ENCODE measurements at regions of chr11 and their contacts with region 1.

Region 1: GRCh38 chr11:20609727-20610707 is 10.6 kb downstream of the SLC6A5 start:
- DNase-seq: no peak
- ATAC-seq: peak; percentile 99
- H3K4me3 ChIP-seq: peak overlapping the region; percentile 32; the same call in 1 of the 2 replicates
- H3K27ac ChIP-seq: no peak overlapping the region
- H3K4me1 ChIP-seq: peaks cover 4% of the 10 kb centered on the region; the same call in 1 of the 2 replicates
- H3K27me3 ChIP-seq: peaks cover 3 to 16% of the 10 kb centered on the region in 2 experiments
- CTCF ChIP-seq: peak; percentile 96 to 98 (median 97)
- EP300 ChIP-seq: no peak
- POLR2A ChIP-seq: no peak
- RAD21 ChIP-seq: peak; percentile 97

Region 2: GRCh38 chr11:18791207-18791968 is 1818.6 kb before region 1 on chr11 and contains the start of gene PTPN5:
- CTCF ChIA-PET with region 1: no interaction called
- POLR2A ChIA-PET with region 1: no interaction called
- RAD21 ChIA-PET with region 1: no interaction called
- SMC1A ChIA-PET with region 1: no interaction called
- in situ Hi-C with region 1: no loop called
- intact Hi-C with region 1: no loop called
- DNase-seq: no peak
- ATAC-seq: peak; percentile 32; the same call in 2 of the 3 replicates
- H3K4me3 ChIP-seq: no peak within 1 kb of the TSS
- H3K27ac ChIP-seq: no peak within 1 kb of the TSS
- H3K4me1 ChIP-seq: no peaks in the 10 kb centered on the region
- H3K27me3 ChIP-seq: peaks cover 9 to 15% of the 10 kb centered on the region in 2 experiments
- CTCF ChIP-seq: no peak
- EP300 ChIP-seq: no peak
- POLR2A ChIP-seq: no peak
- RAD21 ChIP-seq: no peak
- polyA plus RNA-seq, gene PTPN5: not detected

Region 3: GRCh38 chr11:20387241-20388095 is 222.5 kb before region 1 on chr11 and contains the start of gene PRMT3:
- CTCF ChIA-PET with region 1: interaction called, 10 read pairs
- POLR2A ChIA-PET with region 1: no interaction called
- RAD21 ChIA-PET with region 1: interaction called, 7 read pairs
- SMC1A ChIA-PET with region 1: no interaction called
- in situ Hi-C with region 1: loop called (anchors 5 kb)
- intact Hi-C with region 1: loop called (anchors 2 kb)
- DNase-seq: peak; percentile 84
- ATAC-seq: peak; percentile 88
- H3K4me3 ChIP-seq: peak within 1 kb of the TSS; percentile 94
- H3K27ac ChIP-seq: peak within 1 kb of the TSS; percentile 96
- H3K4me1 ChIP-seq: no peaks in the 10 kb centered on the region
- H3K27me3 ChIP-seq: no peaks in the 10 kb centered on the region
- CTCF ChIP-seq: peak in 2 of 3 experiments; percentile 94 to 97; a peak in 5 of 6 replicates
- EP300 ChIP-seq: no peak
- POLR2A ChIP-seq: peak; percentile 94
- RAD21 ChIP-seq: peak; percentile 44; the same call in 1 of the 2 replicates
- polyA plus RNA-seq, gene PRMT3: 13.9 TPM

Region 4: DNA sequence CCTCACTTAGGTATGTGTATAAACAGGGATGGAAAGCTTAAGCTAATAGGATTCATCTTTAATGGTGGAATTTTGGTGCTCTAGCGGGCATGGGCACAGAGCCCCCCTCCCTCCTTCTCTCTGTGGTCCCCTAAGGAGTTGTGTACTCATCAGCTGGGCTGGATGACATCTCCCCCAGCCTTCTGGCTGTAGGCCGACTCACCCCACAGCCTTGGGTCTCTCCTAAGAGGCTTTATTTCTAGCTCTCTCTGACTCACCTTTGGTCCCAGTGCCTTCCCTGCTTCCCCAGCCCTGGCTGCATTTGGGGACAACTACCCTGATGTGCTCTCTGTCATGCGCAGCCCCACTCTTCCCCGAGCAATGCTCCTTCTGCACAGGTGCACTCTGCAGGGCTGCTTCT is 16.3 kb after region 1 on chr11:
- CTCF ChIA-PET with region 1: interaction called, 12 read pairs
- POLR2A ChIA-PET with region 1: no interaction called
- RAD21 ChIA-PET with region 1: interaction called, 3 read pairs
- SMC1A ChIA-PET with region 1: no interaction called
- in situ Hi-C with region 1: no loop called
- intact Hi-C with region 1: no loop called
- DNase-seq: no peak
- ATAC-seq: no peak
- H3K4me3 ChIP-seq: no peak overlapping the region
- H3K27ac ChIP-seq: no peak overlapping the region
- H3K4me1 ChIP-seq: no peaks in the 10 kb centered on the region
- H3K27me3 ChIP-seq: peaks cover 0 to 8% of the 10 kb centered on the region in 2 experiments; a peak in 2 of 4 replicates
- CTCF ChIP-seq: no peak
- EP300 ChIP-seq: no peak
- POLR2A ChIP-seq: no peak
- RAD21 ChIP-seq: no peak

Region 5: DNA sequence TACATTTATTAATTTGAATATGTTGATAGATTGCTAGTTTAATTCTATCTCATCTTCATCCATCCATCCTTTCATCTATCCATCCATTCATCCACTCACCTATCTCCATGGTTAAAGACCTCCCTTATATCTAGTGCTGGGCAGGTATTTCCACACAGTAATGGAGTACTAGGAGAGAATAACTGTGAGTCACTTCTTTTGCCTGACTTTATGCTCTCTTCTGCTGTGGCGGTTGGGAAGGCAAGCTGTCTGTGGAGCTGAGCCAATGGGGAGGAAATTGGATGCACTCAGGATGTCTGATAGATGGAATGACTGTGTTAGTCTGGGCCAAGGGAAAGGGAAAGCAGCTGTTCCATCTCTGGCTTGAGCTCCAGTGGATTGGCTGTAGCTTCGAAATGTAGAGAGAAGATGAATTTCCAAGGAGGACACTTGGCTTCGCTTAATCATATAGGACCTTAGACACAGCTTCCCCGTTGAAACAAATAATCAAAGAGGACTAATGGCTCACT is 119.6 kb after region 1 on chr11:
- CTCF ChIA-PET with region 1: no interaction called
- POLR2A ChIA-PET with region 1: no interaction called
- RAD21 ChIA-PET with region 1: no interaction called
- SMC1A ChIA-PET with region 1: no interaction called
- in situ Hi-C with region 1: no loop called
- intact Hi-C with region 1: no loop called
- DNase-seq: no peak
- ATAC-seq: no peak
- H3K4me3 ChIP-seq: no peak overlapping the region
- H3K27ac ChIP-seq: no peak overlapping the region
- H3K4me1 ChIP-seq: no peaks in the 10 kb centered on the region
- H3K27me3 ChIP-seq: no peaks in the 10 kb centered on the region
- CTCF ChIP-seq: no peak
- EP300 ChIP-seq: no peak
- POLR2A ChIP-seq: no peak
- RAD21 ChIP-seq: no peak

Region 6: DNA sequence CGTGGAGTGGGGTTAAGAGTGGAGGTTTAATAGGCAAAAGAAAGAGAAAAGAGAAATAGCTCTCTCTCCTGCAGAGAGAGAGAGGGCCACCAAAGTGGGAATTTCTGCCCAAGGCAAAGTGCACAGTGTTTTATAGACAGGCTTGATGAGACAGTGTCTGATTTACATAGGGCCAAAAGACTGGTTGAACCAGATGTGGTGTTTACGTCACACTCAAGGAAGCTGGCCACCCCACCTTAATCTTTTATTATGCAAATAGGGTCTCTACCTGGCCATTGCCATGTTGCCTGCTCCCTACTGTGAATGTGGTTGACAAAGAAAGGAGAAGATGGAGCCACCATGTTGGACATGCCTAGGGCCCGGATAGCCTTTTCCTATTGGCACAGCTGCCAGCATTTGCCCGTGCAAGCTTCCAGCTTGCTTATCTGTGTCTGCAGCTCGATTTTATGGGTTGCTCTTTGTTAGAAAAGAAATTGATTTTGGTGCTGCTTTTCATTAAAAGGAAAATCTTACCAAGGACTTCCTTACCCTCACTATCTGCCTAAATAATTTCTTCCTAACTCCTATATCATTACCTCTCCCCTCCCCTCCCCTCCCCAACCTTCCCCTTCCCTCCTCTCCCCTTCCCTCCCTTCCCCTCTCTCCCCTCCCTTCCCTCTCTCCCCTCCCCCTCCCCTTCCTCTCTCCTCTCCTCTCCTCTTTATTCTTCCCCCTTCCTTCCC is 495.3 kb after region 1 on chr11:
- CTCF ChIA-PET with region 1: no interaction called
- POLR2A ChIA-PET with region 1: no interaction called
- RAD21 ChIA-PET with region 1: no interaction called
- SMC1A ChIA-PET with region 1: no interaction called
- in situ Hi-C with region 1: no loop called
- intact Hi-C with region 1: no loop called
- DNase-seq: no peak
- ATAC-seq: no peak
- H3K4me3 ChIP-seq: no peak overlapping the region
- H3K27ac ChIP-seq: no peak overlapping the region
- H3K4me1 ChIP-seq: no peaks in the 10 kb centered on the region
- H3K27me3 ChIP-seq: no peaks in the 10 kb centered on the region
- CTCF ChIP-seq: no peak
- EP300 ChIP-seq: no peak
- POLR2A ChIP-seq: no peak
- RAD21 ChIP-seq: no peak